Sigmoid colon (tissue), 7 donors: ENCODE measurements at regions of chr6 and their contacts with region 1.

Region 1: DNA sequence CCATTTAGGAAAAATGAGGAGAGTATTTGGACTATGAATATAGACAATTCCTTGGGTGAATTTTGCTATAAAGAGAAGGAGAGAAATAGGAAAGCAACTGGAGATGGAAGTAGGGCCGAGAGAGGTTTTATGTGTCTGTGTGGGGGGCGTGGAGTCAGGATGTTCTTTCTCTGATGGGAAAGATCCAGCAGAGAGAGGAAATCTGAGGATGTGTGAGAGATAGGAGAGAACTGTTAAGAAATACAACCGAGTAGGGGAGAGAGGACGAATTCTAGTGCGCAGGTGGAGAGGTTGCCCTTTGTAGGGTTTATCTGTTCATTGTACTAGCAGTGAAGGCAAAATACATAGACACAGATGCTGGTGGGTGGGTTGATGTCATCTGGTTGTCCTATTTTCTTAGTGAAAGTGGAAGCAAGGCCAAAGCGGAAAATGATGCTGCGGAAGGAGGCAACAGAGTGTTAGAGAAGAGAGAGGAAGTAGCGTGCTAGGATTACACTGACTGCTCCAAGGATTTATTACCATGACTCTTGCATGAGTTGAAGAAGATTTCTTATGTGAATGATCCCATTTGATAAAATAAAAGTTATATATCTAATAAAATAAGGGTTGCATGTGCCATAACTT is 57.7 kb downstream of the CLVS2 start:
- DNase-seq: no peak
- H3K4me3 ChIP-seq: no peak overlapping the region
- H3K27ac ChIP-seq: no peak overlapping the region
- H3K4me1 ChIP-seq: peaks cover 0 to 8% (median 6%) of the 10 kb centered on the region in 4 donors
- H3K27me3 ChIP-seq: no peaks in the 10 kb centered on the region
- CTCF ChIP-seq: no peak
- EP300 ChIP-seq: no peak
- POLR2A ChIP-seq: no peak

Region 2: DNA sequence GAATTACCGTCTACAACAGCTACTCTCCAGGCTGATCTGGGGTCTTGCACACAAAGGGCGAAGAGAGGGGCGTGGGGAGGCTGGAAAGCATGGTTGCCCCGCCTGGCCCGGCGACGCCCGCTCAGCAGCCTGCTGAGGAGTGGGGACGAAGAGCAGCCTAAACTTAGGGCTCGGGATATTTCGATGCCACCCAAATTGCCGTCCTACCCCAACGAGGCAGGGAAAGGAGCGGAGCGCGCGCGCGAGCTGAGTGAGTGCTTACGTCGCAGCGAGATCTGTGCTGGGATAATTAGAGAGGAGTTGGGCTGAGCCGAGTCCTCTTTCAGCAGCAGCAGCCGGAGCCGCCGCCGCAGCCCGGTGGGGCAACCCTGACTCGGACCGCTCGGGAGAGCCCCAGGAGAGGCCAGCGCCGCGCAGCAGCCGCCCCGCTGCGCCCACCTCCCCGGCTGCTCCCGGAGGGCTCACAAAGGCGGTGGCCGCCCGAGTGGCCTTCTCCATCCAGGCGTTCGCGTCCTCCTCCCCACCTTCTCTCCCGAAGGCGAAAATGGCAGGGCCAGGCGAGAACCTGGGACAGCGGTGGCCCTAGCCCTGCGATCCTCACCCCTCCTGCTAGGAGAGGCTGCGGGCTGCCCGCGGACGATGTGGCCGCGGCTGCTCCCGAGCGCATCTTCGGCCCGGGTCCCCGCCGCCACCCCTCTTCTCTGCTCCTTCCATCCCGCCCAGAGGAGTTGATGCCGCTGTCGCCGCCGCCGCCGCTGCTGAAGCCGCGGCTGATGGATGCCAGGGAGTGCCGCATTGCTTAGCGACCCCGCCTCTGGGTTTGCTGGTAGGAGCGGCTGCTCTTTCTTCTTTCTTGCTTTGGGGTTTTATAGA is 57.6 kb before region 1 on chr6 and contains the start of gene CLVS2:
- intact Hi-C with region 1: loop called (anchors 10 kb)
- DNase-seq: peak; percentile 64
- H3K4me3 ChIP-seq: peak within 1 kb of the TSS; percentile 45 to 57 (median 54)
- H3K27ac ChIP-seq: peak within 1 kb of the TSS in 2 of 4 donors; percentile 11 to 58
- H3K4me1 ChIP-seq: peaks cover 0 to 15% (median 6%) of the 10 kb centered on the region in 4 donors
- H3K27me3 ChIP-seq: peaks cover 0 to 53% (median 0%) of the 10 kb centered on the region in 3 donors
- CTCF ChIP-seq: no peak
- EP300 ChIP-seq: no peak
- POLR2A ChIP-seq: no peak
- total RNA-seq, gene CLVS2: 1.5 to 7.5 (median 2.3) TPM